ENCODE measurements at regions of chr17 and their contacts with region 1.

Region 1: GRCh38 chr17:58317421-58318064 is 11.1 kb downstream of the TSPOAP1 start:
- DNase-seq: peak in 1 of 2 experiments; percentile 62
- H3K4me3 ChIP-seq: no peak overlapping the region
- H3K27ac ChIP-seq: no peak overlapping the region
- H3K4me1 ChIP-seq: no peaks in the 10 kb centered on the region; a peak in 1 of 7 replicates
- H3K27me3 ChIP-seq: no peaks in the 10 kb centered on the region; a peak in 2 of 7 replicates
- CTCF ChIP-seq: peak; percentile 71 to 87 (median 83)
- EP300 ChIP-seq: no peak
- POLR2A ChIP-seq: no peak
- RAD21 ChIP-seq: peak; percentile 94

Region 2: GRCh38 chr17:58328195-58329034 is 10.9 kb after region 1 on chr17 and contains the start of gene TSPOAP1:
- CTCF ChIA-PET with region 1: interaction called, 384 read pairs
- POLR2A ChIA-PET with region 1: interaction called, 8 read pairs
- DNase-seq: peak in 1 of 2 experiments; percentile 84
- H3K4me3 ChIP-seq: peak within 1 kb of the TSS in 3 of 4 experiments; percentile 7 to 40 (median 21); a peak in 4 of 8 replicates
- H3K27ac ChIP-seq: no peak within 1 kb of the TSS
- H3K4me1 ChIP-seq: peaks cover 0 to 42% (median 29%) of the 10 kb centered on the region in 4 experiments; a peak in 6 of 7 replicates
- H3K27me3 ChIP-seq: peaks cover 0 to 16% (median 10%) of the 10 kb centered on the region in 4 experiments; a peak in 5 of 7 replicates
- CTCF ChIP-seq: no peak
- EP300 ChIP-seq: no peak
- POLR2A ChIP-seq: no peak
- RAD21 ChIP-seq: no peak
- total RNA-seq, gene TSPOAP1: 9.2 and 9.8 TPM in 2 replicates

Region 3: GRCh38 chr17:58352014-58352842 is 34.7 kb after region 1 on chr17 and contains the start of gene SUPT4H1:
- CTCF ChIA-PET with region 1: interaction called, 384 read pairs
- POLR2A ChIA-PET with region 1: interaction called, 46 read pairs
- DNase-seq: peak; percentile 80 to 88
- H3K4me3 ChIP-seq: peak within 1 kb of the TSS; percentile 90 to 96 (median 94)
- H3K27ac ChIP-seq: peak within 1 kb of the TSS; percentile 88
- H3K4me1 ChIP-seq: peaks cover 0 to 2% (median 0%) of the 10 kb centered on the region in 4 experiments; a peak in 1 of 7 replicates
- H3K27me3 ChIP-seq: no peaks in the 10 kb centered on the region
- CTCF ChIP-seq: peak in 1 of 3 experiments; percentile 10; a peak in 1 of 4 replicates
- EP300 ChIP-seq: peak in 1 of 2 experiments; percentile 97; a peak in 2 of 3 replicates
- POLR2A ChIP-seq: peak; percentile 68 to 86
- RAD21 ChIP-seq: peak in 1 of 2 experiments; percentile 22; a peak in 3 of 4 replicates
- total RNA-seq, gene SUPT4H1: 103 and 112 TPM in 2 replicates

Region 4: GRCh38 chr17:58432806-58433572 is 115.4 kb after region 1 on chr17:
- CTCF ChIA-PET with region 1: interaction called, 24 read pairs
- POLR2A ChIA-PET with region 1: no interaction called
- DNase-seq: no peak
- H3K4me3 ChIP-seq: no peak overlapping the region
- H3K27ac ChIP-seq: no peak overlapping the region
- H3K4me1 ChIP-seq: no peaks in the 10 kb centered on the region
- H3K27me3 ChIP-seq: peaks cover 0 to 2% (median 0%) of the 10 kb centered on the region in 4 experiments; a peak in 1 of 7 replicates
- CTCF ChIP-seq: no peak
- EP300 ChIP-seq: no peak
- POLR2A ChIP-seq: no peak
- RAD21 ChIP-seq: no peak

Measured in H1 (cell line).